Activated CD4-positive, alpha-beta T cell treated with anti-CD3 and anti-CD28 coated beads for 36 hours (primary cell): ENCODE measurements at regions of chr1 and their contacts with region 1.

Region 1: DNA sequence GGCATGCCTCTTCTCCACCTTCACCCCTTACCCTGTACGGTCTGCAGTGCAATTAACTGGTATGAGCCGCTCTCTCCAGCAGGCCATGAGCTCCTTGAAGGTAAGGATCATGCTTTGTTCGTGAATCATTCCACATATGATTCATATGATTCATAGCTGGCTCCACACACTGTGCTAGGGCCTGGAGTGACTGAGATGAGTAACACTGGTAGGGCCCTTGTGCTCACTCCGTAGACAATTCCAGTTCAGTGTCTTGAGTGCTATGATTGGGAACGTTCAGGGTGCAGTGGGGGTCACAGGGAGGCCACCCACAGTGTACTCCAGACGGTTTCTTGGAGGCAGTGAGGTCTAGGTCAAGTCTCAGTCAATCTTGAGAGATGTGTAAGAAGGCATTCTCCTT is 239.8 kb downstream of the LMX1A start:
- DNase-seq: no peak
- ATAC-seq: no peak
- H3K4me3 Mint-ChIP-seq: no peak overlapping the region
- H3K27ac Mint-ChIP-seq: no peak overlapping the region
- H3K4me1 Mint-ChIP-seq: no peaks in the 10 kb centered on the region
- H3K27me3 Mint-ChIP-seq: peaks cover 31% of the 10 kb centered on the region

Region 2: GRCh38 chr1:164748253-164748899 is 368.4 kb before region 1 on chr1:
- CTCF ChIA-PET with region 1: no interaction called
- POLR2A ChIA-PET with region 1: no interaction called
- intact Hi-C with region 1: no loop called
- DNase-seq: no peak
- ATAC-seq: no peak
- H3K4me3 Mint-ChIP-seq: no peak overlapping the region
- H3K27ac Mint-ChIP-seq: no peak overlapping the region
- H3K4me1 Mint-ChIP-seq: no peaks in the 10 kb centered on the region
- H3K27me3 Mint-ChIP-seq: no peaks in the 10 kb centered on the region

Region 3: DNA sequence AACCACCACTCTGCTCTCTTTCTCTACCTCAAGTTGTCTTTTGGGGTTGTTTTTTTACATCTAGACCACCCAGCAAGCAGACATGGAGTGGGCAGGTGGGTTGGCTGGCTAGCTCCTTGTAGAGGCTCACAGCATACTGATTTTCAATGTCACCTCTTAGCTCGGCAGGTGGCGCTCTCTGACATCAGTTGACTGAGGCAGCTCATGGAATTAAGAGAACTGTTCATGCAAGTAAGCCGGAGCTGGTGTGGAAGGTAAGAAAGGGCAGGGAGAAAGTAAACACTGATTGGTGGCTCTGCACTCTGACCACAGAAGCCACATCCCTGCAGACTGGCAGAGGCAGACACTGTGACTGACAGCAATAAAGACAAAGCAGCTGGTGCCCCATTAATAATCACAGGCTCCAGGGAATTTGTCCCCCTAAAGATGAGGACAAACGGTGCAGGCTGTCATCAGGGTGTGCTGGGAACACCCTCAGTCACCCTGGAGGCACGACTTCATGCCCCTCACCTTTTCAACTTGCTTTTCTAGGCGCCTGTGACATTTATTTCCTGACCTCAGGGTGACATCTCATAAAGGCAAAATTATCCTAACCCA is 12.9 kb after region 1 on chr1:
- CTCF ChIA-PET with region 1: interaction called, 10 read pairs
- POLR2A ChIA-PET with region 1: no interaction called
- intact Hi-C with region 1: no loop called
- DNase-seq: peak; percentile 69
- ATAC-seq: no peak
- H3K4me3 Mint-ChIP-seq: no peak overlapping the region
- H3K27ac Mint-ChIP-seq: no peak overlapping the region
- H3K4me1 Mint-ChIP-seq: no peaks in the 10 kb centered on the region
- H3K27me3 Mint-ChIP-seq: peaks cover 13% of the 10 kb centered on the region

Region 4: GRCh38 chr1:165355977-165356811 is 239.5 kb after region 1 on chr1 and contains the start of gene LMX1A:
- CTCF ChIA-PET with region 1: no interaction called
- POLR2A ChIA-PET with region 1: no interaction called
- intact Hi-C with region 1: no loop called
- DNase-seq: no peak
- ATAC-seq: no peak
- H3K4me3 Mint-ChIP-seq: no peak within 1 kb of the TSS
- H3K27ac Mint-ChIP-seq: no peak within 1 kb of the TSS
- H3K4me1 Mint-ChIP-seq: peaks cover 12% of the 10 kb centered on the region
- H3K27me3 Mint-ChIP-seq: peaks cover 63% of the 10 kb centered on the region
- total RNA-seq, gene LMX1A: not detected